Breast epithelium (tissue), 4 donors: ENCODE measurements at regions of chr19 and their contacts with region 1.

Region 1: GRCh38 chr19:58408152-58409009 is at the start of gene ZNF584:
- DNase-seq: peak; percentile 89 to 91
- H3K4me3 ChIP-seq: peak within 1 kb of the TSS; percentile 76 to 93 (median 88)
- H3K27ac ChIP-seq: peak within 1 kb of the TSS; percentile 89 to 94
- H3K4me1 ChIP-seq: peaks cover 2 to 11% of the 10 kb centered on the region in 2 donors
- H3K27me3 ChIP-seq: no peaks in the 10 kb centered on the region
- CTCF ChIP-seq: no peak
- POLR2A ChIP-seq: peak; percentile 77
- total RNA-seq, gene ZNF584: 13.6 to 16.1 (median 15.8) TPM

Region 2: DNA sequence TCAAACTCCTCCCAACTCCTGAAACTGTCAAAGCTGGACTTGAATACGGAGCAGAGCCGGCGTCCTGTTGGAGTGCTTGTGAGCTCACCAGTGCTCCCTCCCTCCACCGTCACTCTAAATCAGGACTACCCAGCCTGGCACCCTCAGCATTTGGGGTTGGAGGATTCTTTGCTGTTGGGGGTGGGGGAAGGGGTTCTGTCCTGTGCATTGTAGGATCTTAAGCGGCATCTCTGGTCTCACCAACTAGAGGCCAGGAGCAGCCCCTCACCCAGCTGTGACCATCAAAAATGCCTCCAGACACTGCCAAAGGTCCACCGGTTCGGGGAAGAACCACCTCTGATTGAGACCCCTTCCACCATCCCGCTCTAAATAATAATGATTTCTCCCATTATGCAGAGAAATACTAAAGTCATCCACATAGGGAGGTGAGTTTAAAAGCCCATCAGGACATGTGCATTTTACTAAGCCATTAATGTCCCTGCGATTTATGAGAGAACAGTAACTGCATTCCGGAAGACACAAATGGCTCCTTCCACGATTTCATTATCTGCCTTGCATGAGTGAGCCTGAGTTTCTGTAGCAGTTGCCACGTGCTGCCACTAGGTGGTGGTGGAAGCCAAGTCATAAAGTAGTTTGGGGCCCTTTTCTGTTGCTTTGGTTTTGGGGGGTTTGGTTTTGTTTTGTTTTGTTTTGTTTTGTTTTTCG is 1304.7 kb before region 1 on chr19:
- intact Hi-C with region 1: loop called (anchors 10 kb)
- DNase-seq: peak in 1 of 2 donors; percentile 44
- H3K4me3 ChIP-seq: peak overlapping the region in 2 of 3 donors; percentile 15 to 49
- H3K27ac ChIP-seq: no peak overlapping the region
- H3K4me1 ChIP-seq: no peaks in the 10 kb centered on the region
- H3K27me3 ChIP-seq: peaks cover 11 to 29% of the 10 kb centered on the region in 2 donors
- CTCF ChIP-seq: peak; percentile 63 to 88 (median 75)
- POLR2A ChIP-seq: no peak